Posterior vena cava (tissue), 2 donors: ENCODE measurements at regions of chr10 and their contacts with region 1.

Region 1: GRCh38 chr10:69769395-69769992 is 32.2 kb upstream of the COL13A1 start:
- DNase-seq: peak; percentile 83

Region 2: GRCh38 chr10:69696073-69696731 is 73.3 kb before region 1 on chr10:
- intact Hi-C with region 1: loop called in 1 of 2 experiments (anchors 2 kb)
- DNase-seq: no peak

Region 3: GRCh38 chr10:69807122-69807521 is 37.6 kb after region 1 on chr10:
- intact Hi-C with region 1: loop called in 1 of 2 experiments (anchors 1 kb)
- DNase-seq: no peak

Region 4: DNA sequence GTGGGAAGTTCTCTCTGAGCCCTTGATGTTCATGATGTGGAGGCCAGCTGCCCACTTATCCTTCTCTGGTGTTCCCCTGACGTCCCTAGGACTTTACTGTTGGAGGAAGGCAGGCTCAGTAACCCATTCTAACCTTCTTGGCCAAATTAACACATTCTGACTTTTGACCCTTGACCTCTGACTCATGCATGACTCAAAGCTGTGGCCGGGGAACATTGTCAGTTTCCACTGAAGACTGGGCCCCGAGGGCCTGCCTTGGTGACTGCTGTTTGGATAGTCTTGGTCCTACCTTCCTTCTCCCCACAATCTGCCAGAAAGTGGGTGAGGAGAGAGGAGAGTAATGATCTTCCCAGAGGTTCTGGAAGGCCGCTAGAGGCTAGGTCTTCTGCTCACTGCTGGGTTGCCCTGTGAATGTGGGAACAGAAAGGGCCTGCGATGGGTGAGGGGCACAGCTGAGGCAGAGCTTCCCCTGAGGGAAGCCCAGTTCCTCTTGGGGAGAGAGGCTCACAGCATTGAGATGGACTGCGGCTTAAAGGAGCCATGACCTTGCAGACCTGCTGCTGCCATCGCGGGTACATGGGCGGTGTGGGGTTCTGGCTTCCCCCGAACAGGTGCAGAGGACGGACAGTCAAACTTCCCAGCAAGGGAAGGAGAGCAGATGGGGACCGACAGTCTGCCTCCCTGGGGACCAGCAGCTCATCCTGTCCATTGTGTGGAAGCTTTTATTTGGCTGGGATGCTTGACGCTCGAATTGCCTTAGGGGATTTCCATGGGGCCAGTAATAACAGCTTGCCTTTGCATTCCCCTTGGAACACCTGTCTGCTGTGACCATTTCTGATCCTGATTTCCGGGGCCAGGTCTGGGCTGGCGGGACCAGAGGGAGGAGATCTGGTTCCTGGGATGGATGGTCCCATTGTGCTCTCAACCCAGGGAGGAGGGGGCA is 946.6 kb after region 1 on chr10:
- intact Hi-C with region 1: no loop called
- DNase-seq: no peak

Region 5: DNA sequence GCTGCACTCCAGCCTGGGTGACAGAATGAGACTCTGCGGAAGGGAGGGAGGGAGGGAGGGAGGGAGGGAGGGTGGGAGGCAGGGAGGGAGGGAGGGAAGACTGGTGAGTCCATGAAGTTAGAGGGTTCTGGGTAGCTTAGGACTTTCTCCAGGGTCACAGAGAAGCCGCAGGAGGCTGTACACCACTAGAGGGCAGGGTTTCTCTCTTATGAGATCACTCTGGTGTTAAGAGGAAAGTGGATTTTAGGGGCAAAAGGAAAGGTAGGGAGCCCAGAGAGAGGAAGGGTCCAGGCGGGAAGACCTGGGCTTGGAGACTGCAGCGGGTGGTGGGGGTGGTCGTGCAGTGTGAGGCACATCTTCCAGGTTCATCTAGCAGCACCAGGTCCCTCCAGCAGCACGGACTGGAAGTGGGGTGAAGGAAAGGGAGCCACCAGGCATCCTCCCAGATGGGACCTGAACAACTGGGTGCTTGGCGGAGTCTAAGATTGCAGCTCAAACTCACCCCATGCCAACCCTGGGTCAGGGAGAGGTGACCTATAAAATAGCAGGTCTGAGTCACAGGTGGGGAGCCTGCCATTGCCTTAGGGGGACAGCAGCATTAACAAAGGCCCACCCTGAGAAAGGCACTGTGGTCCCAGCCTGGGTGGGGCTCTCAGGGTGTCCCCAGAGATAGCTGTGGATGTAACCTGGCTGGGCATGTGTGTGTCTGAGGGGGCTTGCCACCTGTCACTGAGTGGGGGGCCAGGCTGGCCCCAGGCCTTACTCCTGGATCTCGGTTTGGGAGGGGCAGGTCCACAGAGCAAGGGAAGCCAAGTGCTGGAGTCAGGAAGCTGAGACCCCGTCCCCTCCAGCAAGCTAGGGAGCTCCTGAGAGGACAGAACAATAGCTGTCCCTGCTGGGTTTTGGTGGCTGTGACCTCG is 1501.1 kb after region 1 on chr10:
- intact Hi-C with region 1: loop called in 1 of 2 experiments (anchors 10 kb)
- DNase-seq: no peak